Natural killer cell (primary cell): ENCODE measurements at regions of chr1 and their contacts with region 1.

Region 1: GRCh38 chr1:100351095-100351891 is 1.0 kb upstream of the CDC14A start:
- DNase-seq: peak; percentile 78 to 94
- ATAC-seq: peak; percentile 65 to 79 (median 65)
- H3K4me3 ChIP-seq: peak overlapping the region; percentile 79
- H3K4me3 Mint-ChIP-seq: peak overlapping the region; percentile 91
- H3K27ac ChIP-seq: peak overlapping the region; percentile 81
- H3K27ac Mint-ChIP-seq: peak overlapping the region; percentile 89 to 92
- H3K4me1 ChIP-seq: peaks cover 16% of the 10 kb centered on the region
- H3K4me1 Mint-ChIP-seq: peaks cover 39 to 46% of the 10 kb centered on the region in 2 donors
- H3K27me3 ChIP-seq: no peaks in the 10 kb centered on the region
- H3K27me3 Mint-ChIP-seq: no peaks in the 10 kb centered on the region
- CTCF ChIP-seq: no peak

Region 2: GRCh38 chr1:99992760-99993467 is 358.4 kb before region 1 on chr1:
- intact Hi-C with region 1: no loop called
- DNase-seq: no peak
- ATAC-seq: no peak
- H3K4me3 ChIP-seq: no peak overlapping the region
- H3K4me3 Mint-ChIP-seq: no peak overlapping the region
- H3K27ac ChIP-seq: no peak overlapping the region
- H3K27ac Mint-ChIP-seq: no peak overlapping the region
- H3K4me1 ChIP-seq: no peaks in the 10 kb centered on the region
- H3K4me1 Mint-ChIP-seq: peaks cover 4 to 7% of the 10 kb centered on the region in 2 donors
- H3K27me3 ChIP-seq: no peaks in the 10 kb centered on the region
- H3K27me3 Mint-ChIP-seq: no peaks in the 10 kb centered on the region
- CTCF ChIP-seq: no peak

Region 3: GRCh38 chr1:100249537-100250257 is 101.6 kb before region 1 on chr1 and contains the start of gene DBT:
- intact Hi-C with region 1: loop called (anchors 5 kb)
- DNase-seq: peak; percentile 80 to 95
- ATAC-seq: peak; percentile 99 to 100 (median 100)
- H3K4me3 ChIP-seq: peak within 1 kb of the TSS; percentile 84
- H3K4me3 Mint-ChIP-seq: no peak within 1 kb of the TSS
- H3K27ac ChIP-seq: peak within 1 kb of the TSS; percentile 74
- H3K27ac Mint-ChIP-seq: no peak within 1 kb of the TSS
- H3K4me1 ChIP-seq: peaks cover 7% of the 10 kb centered on the region
- H3K4me1 Mint-ChIP-seq: peaks cover 0 to 10% of the 10 kb centered on the region in 2 donors
- H3K27me3 ChIP-seq: no peaks in the 10 kb centered on the region
- H3K27me3 Mint-ChIP-seq: peaks cover 3 to 10% of the 10 kb centered on the region in 2 donors
- CTCF ChIP-seq: no peak
- total RNA-seq, gene DBT: 9.9 to 11.5 (median 10.2) TPM

Region 4: GRCh38 chr1:100265931-100266740 is 85.2 kb before region 1 on chr1 and contains the start of gene RTCA:
- intact Hi-C with region 1: loop called (anchors 2 kb)
- DNase-seq: peak; percentile 93 to 99
- ATAC-seq: peak; percentile 93 to 98 (median 94)
- H3K4me3 ChIP-seq: peak within 1 kb of the TSS; percentile 86
- H3K4me3 Mint-ChIP-seq: peak within 1 kb of the TSS; percentile 100
- H3K27ac ChIP-seq: peak within 1 kb of the TSS; percentile 77
- H3K27ac Mint-ChIP-seq: peak within 1 kb of the TSS; percentile 97 to 99
- H3K4me1 ChIP-seq: peaks cover 32% of the 10 kb centered on the region
- H3K4me1 Mint-ChIP-seq: peaks cover 46 to 47% of the 10 kb centered on the region in 2 donors
- H3K27me3 ChIP-seq: no peaks in the 10 kb centered on the region
- H3K27me3 Mint-ChIP-seq: no peaks in the 10 kb centered on the region
- CTCF ChIP-seq: no peak
- total RNA-seq, gene RTCA: 49.3 to 60.8 (median 52.3) TPM

Region 5: GRCh38 chr1:100396651-100397050 is 45.4 kb after region 1 on chr1:
- intact Hi-C with region 1: loop called (anchors 2 kb)
- DNase-seq: peak in 1 of 2 donors; percentile 75
- ATAC-seq: peak; percentile 67 to 79 (median 77)
- H3K4me3 ChIP-seq: no peak overlapping the region
- H3K4me3 Mint-ChIP-seq: peak overlapping the region; percentile 72
- H3K27ac ChIP-seq: peak overlapping the region; percentile 89
- H3K27ac Mint-ChIP-seq: peak overlapping the region; percentile 80 to 95
- H3K4me1 ChIP-seq: peaks cover 49% of the 10 kb centered on the region
- H3K4me1 Mint-ChIP-seq: peaks cover 77% of the 10 kb centered on the region in 2 donors
- H3K27me3 ChIP-seq: no peaks in the 10 kb centered on the region
- H3K27me3 Mint-ChIP-seq: no peaks in the 10 kb centered on the region
- CTCF ChIP-seq: no peak

Region 6: GRCh38 chr1:100443811-100444571 is 92.7 kb after region 1 on chr1:
- intact Hi-C with region 1: loop called (anchors 5 kb)
- DNase-seq: peak in 1 of 2 donors; percentile 70
- ATAC-seq: peak; percentile 43 to 65 (median 58)
- H3K4me3 ChIP-seq: no peak overlapping the region
- H3K4me3 Mint-ChIP-seq: peak overlapping the region; percentile 77
- H3K27ac ChIP-seq: peak overlapping the region; percentile 46
- H3K27ac Mint-ChIP-seq: peak overlapping the region; percentile 85 to 92
- H3K4me1 ChIP-seq: peaks cover 29% of the 10 kb centered on the region
- H3K4me1 Mint-ChIP-seq: peaks cover 53 to 55% of the 10 kb centered on the region in 2 donors
- H3K27me3 ChIP-seq: no peaks in the 10 kb centered on the region
- H3K27me3 Mint-ChIP-seq: no peaks in the 10 kb centered on the region
- CTCF ChIP-seq: no peak

Region 7: DNA sequence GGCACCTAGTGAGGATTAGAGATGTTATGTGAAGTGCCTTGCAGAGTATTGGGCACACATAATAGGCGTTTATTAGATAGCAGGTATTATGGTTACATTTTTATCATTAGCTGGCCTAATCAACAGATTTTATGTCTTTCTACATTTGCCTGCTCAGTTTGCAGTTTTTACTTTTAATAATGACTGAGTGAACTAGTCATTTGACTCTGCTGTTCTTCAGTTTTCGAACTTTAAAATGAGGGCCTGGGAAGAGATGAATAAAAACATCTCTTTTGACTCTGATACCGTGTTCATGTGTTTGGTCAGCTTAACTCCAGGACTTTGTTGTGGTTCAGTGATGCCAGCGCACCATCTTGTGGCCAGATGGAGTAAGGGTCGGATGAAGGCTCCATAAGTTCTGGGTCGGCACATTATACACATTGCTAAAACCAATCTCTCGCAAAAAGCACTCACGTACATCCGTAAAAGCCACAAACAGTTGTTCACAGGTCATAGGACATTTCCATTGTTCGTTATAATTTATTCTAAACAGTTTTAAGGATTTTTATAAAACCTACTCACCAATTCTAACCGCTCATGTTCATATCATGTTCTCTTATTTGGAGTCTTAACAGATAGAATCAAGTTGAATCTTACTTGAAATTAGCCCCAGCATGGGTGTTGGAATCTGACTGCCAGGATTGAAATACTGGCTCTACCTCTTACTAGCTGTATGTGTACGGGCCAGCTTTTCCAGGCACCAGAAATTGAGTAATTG is 108.2 kb after region 1 on chr1:
- intact Hi-C with region 1: loop called (anchors 5 kb)
- DNase-seq: peak; percentile 56 to 87
- ATAC-seq: peak; percentile 88 to 89 (median 88)
- H3K4me3 ChIP-seq: no peak overlapping the region
- H3K4me3 Mint-ChIP-seq: no peak overlapping the region
- H3K27ac ChIP-seq: no peak overlapping the region
- H3K27ac Mint-ChIP-seq: peak overlapping the region; percentile 47 to 71
- H3K4me1 ChIP-seq: peaks cover 7% of the 10 kb centered on the region
- H3K4me1 Mint-ChIP-seq: peaks cover 21 to 25% of the 10 kb centered on the region in 2 donors
- H3K27me3 ChIP-seq: no peaks in the 10 kb centered on the region
- H3K27me3 Mint-ChIP-seq: no peaks in the 10 kb centered on the region
- CTCF ChIP-seq: peak; percentile 82

Region 8: GRCh38 chr1:100606438-100606837 is 255.1 kb after region 1 on chr1:
- intact Hi-C with region 1: no loop called
- DNase-seq: peak in 1 of 2 donors; percentile 40
- ATAC-seq: peak in 2 of 3 donors; percentile 47 to 54
- H3K4me3 ChIP-seq: no peak overlapping the region
- H3K4me3 Mint-ChIP-seq: no peak overlapping the region
- H3K27ac ChIP-seq: no peak overlapping the region
- H3K27ac Mint-ChIP-seq: no peak overlapping the region
- H3K4me1 ChIP-seq: no peaks in the 10 kb centered on the region
- H3K4me1 Mint-ChIP-seq: no peaks in the 10 kb centered on the region
- H3K27me3 ChIP-seq: no peaks in the 10 kb centered on the region
- H3K27me3 Mint-ChIP-seq: peaks cover 12 to 15% of the 10 kb centered on the region in 2 donors
- CTCF ChIP-seq: peak; percentile 37